SK-N-SH (cell line): ENCODE measurements at regions of chr22 and their contacts with region 1.

Region 1: GRCh38 chr22:24189249-24190158 is 8.2 kb downstream of the SUSD2 start:
- DNase-seq: peak; percentile 95
- H3K4me3 ChIP-seq: no peak overlapping the region; a peak in 1 of 4 replicates
- H3K27ac ChIP-seq: no peak overlapping the region; a peak in 1 of 4 replicates
- H3K4me1 ChIP-seq: peaks cover 0 to 15% of the 10 kb centered on the region in 2 experiments; a peak in 1 of 4 replicates
- H3K27me3 ChIP-seq: no peaks in the 10 kb centered on the region
- CTCF ChIP-seq: peak; percentile 95
- EP300 ChIP-seq: no peak
- RAD21 ChIP-seq: peak; percentile 96

Region 2: DNA sequence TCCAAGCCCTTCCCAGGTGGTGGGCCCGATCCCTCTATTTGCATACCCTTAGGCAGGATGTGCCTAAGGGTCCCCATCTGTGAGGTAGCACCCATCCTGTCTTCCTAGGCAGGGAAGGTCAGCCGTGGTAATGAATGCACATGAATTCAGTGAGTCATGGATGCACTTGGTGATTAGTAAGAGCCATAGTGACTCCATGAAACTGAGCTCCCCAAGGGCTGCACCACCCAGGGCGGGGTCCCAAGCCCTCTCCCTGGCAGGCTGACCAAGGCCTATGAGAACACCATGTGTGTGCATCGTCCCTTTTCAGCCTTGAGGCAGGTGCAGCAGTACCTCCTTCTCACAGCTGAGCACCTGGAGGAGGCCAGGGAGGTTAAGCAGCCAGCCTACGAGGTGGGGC is 23.8 kb before region 1 on chr22:
- CTCF ChIA-PET with region 1: interaction called, 15 read pairs
- POLR2A ChIA-PET with region 1: no interaction called
- DNase-seq: no peak
- H3K4me3 ChIP-seq: no peak overlapping the region
- H3K27ac ChIP-seq: peak overlapping the region in 1 of 2 experiments; percentile 82; a peak in 1 of 4 replicates
- H3K4me1 ChIP-seq: peaks cover 0 to 54% of the 10 kb centered on the region in 2 experiments; a peak in 1 of 4 replicates
- H3K27me3 ChIP-seq: no peaks in the 10 kb centered on the region
- CTCF ChIP-seq: no peak
- EP300 ChIP-seq: no peak
- RAD21 ChIP-seq: no peak

Region 3: GRCh38 chr22:24200616-24201212 is 11.2 kb after region 1 on chr22:
- CTCF ChIA-PET with region 1: interaction called, 31 read pairs
- POLR2A ChIA-PET with region 1: no interaction called
- DNase-seq: peak; percentile 6
- H3K4me3 ChIP-seq: no peak overlapping the region
- H3K27ac ChIP-seq: peak overlapping the region in 1 of 2 experiments; percentile 48; a peak in 2 of 4 replicates
- H3K4me1 ChIP-seq: peaks cover 3 to 5% of the 10 kb centered on the region in 2 experiments; a peak in 2 of 4 replicates
- H3K27me3 ChIP-seq: no peaks in the 10 kb centered on the region
- CTCF ChIP-seq: no peak
- EP300 ChIP-seq: no peak
- RAD21 ChIP-seq: no peak

Region 4: DNA sequence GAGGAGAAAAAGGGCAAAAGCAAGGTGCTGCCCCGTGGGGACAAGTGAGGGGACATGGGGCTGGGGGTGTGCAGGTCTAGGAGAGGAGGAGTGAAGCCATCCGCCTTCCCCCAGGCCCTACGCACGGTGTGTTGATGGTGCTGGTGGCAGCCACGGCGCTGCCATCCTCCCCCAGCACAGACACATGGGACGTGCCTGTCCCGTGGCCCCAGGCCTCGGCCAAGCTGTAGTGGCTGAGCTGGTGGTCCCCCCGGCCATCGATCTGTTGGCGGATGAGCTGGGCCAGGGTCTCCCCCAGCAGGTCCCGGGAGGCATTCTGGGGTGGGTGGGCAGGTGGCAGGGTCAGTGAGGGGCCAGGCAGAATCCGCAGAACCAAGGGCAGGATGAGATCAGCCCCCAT is 36.4 kb after region 1 on chr22:
- CTCF ChIA-PET with region 1: interaction called, 16 read pairs
- POLR2A ChIA-PET with region 1: no interaction called
- DNase-seq: no peak
- H3K4me3 ChIP-seq: no peak overlapping the region
- H3K27ac ChIP-seq: no peak overlapping the region
- H3K4me1 ChIP-seq: peaks cover 0 to 4% of the 10 kb centered on the region in 2 experiments; a peak in 1 of 4 replicates
- H3K27me3 ChIP-seq: no peaks in the 10 kb centered on the region
- CTCF ChIP-seq: no peak
- EP300 ChIP-seq: no peak
- RAD21 ChIP-seq: no peak

Region 5: DNA sequence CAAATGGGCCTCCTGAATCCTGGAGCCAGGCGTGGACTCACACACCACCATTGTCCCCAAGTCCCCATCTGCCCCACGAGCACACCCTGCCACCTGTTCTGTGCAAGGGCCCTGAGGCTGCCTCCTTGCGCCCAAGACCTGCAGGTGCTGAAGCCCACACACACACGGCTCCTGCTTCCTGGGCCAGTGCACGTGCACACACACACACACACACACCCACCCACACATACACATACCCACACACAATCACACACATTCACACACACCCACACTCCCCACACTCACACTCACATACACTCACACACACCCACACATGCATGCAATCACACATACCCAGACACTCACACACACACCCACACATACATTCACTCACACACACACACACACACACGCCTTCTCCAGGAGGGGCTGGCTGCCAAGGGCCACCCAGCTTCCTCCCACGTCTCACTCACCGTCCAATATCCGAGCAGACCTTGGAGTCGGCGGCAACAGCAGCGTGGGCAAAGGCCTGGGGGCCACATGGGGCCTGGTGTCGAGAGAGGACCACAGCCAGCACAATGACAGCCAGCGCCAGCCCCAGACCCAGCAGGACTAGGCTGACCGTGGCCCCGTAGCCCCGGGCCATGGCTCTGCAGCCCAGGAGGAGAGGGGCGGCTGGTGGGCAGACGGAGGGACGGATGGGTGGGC is 54.7 kb after region 1 on chr22:
- CTCF ChIA-PET with region 1: interaction called, 94 read pairs
- POLR2A ChIA-PET with region 1: no interaction called
- DNase-seq: peak; percentile 84
- H3K4me3 ChIP-seq: no peak overlapping the region; a peak in 1 of 4 replicates
- H3K27ac ChIP-seq: peak overlapping the region in 1 of 2 experiments; percentile 89; a peak in 2 of 4 replicates
- H3K4me1 ChIP-seq: peaks cover 26 to 52% of the 10 kb centered on the region in 2 experiments; a peak in 3 of 4 replicates
- H3K27me3 ChIP-seq: no peaks in the 10 kb centered on the region
- CTCF ChIP-seq: no peak
- EP300 ChIP-seq: peak in 1 of 2 experiments; percentile 14; a peak in 1 of 4 replicates
- RAD21 ChIP-seq: no peak

Region 6: GRCh38 chr22:24736526-24737053 is 547.1 kb after region 1 on chr22:
- CTCF ChIA-PET with region 1: no interaction called
- POLR2A ChIA-PET with region 1: no interaction called
- DNase-seq: no peak
- H3K4me3 ChIP-seq: no peak overlapping the region
- H3K27ac ChIP-seq: no peak overlapping the region
- H3K4me1 ChIP-seq: no peaks in the 10 kb centered on the region
- H3K27me3 ChIP-seq: peaks cover 27% of the 10 kb centered on the region; the same call in 1 of the 2 replicates
- CTCF ChIP-seq: no peak
- EP300 ChIP-seq: no peak
- RAD21 ChIP-seq: no peak